ENCODE measurements at regions of chr20 and their contacts with region 1.

Region 1: GRCh38 chr20:31723319-31724078 is 831 bp upstream of the BCL2L1 start:
- DNase-seq: peak; percentile 97
- H3K4me3 Mint-ChIP-seq: peak overlapping the region; percentile 96
- H3K27ac Mint-ChIP-seq: peak overlapping the region; percentile 97
- H3K4me1 Mint-ChIP-seq: peaks cover 28% of the 10 kb centered on the region
- H3K27me3 Mint-ChIP-seq: no peaks in the 10 kb centered on the region

Region 2: DNA sequence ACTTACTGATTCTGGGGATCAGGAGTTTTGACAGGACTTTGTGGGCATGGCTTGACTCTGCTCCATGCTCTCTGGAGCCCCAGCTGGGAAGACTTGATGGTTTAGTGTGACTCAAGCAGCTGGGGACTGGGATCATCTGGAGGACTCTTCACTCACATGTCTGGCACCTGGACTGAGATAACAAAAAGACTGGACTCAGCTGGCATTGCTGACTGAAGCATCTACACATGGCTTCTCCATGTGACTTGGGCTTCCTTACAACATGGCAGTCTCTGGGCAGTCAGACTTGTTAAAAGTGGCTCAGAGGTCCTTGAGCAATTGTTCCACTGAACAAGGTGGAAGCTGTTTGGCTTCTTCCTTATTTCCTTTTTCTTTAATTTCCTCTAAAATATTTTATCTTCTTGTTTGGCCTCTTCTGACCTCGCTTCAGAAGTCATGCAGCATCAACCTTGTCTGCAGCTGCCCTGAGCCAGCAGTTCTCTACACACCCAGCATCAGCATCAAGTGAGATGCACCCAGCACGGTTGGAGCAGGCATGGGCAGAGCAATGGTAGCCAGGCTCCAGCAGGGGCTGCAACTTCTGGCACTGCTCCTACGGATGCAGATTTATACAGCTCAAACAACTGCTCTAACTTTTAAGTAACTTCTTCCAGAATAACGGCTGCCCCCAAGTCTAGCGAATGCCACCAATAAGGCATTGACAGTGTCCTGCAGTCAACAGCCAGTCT is 214.8 kb before region 1 on chr20:
- CTCF ChIA-PET with region 1: no interaction called
- DNase-seq: no peak
- H3K4me3 Mint-ChIP-seq: no peak overlapping the region
- H3K27ac Mint-ChIP-seq: no peak overlapping the region
- H3K4me1 Mint-ChIP-seq: peaks cover under 1% of the 10 kb centered on the region
- H3K27me3 Mint-ChIP-seq: peaks cover 33% of the 10 kb centered on the region

Region 3: GRCh38 chr20:31633339-31633914 is 90.1 kb before region 1 on chr20:
- CTCF ChIA-PET with region 1: interaction called, 54 read pairs
- DNase-seq: no peak
- H3K4me3 Mint-ChIP-seq: no peak overlapping the region
- H3K27ac Mint-ChIP-seq: no peak overlapping the region
- H3K4me1 Mint-ChIP-seq: no peaks in the 10 kb centered on the region
- H3K27me3 Mint-ChIP-seq: peaks cover 16% of the 10 kb centered on the region

Region 4: GRCh38 chr20:31661625-31662371 is 61.7 kb before region 1 on chr20:
- CTCF ChIA-PET with region 1: interaction called, 348 read pairs
- DNase-seq: peak; percentile 84
- H3K4me3 Mint-ChIP-seq: peak overlapping the region; percentile 73
- H3K27ac Mint-ChIP-seq: peak overlapping the region; percentile 89
- H3K4me1 Mint-ChIP-seq: peaks cover 57% of the 10 kb centered on the region
- H3K27me3 Mint-ChIP-seq: no peaks in the 10 kb centered on the region

Region 5: DNA sequence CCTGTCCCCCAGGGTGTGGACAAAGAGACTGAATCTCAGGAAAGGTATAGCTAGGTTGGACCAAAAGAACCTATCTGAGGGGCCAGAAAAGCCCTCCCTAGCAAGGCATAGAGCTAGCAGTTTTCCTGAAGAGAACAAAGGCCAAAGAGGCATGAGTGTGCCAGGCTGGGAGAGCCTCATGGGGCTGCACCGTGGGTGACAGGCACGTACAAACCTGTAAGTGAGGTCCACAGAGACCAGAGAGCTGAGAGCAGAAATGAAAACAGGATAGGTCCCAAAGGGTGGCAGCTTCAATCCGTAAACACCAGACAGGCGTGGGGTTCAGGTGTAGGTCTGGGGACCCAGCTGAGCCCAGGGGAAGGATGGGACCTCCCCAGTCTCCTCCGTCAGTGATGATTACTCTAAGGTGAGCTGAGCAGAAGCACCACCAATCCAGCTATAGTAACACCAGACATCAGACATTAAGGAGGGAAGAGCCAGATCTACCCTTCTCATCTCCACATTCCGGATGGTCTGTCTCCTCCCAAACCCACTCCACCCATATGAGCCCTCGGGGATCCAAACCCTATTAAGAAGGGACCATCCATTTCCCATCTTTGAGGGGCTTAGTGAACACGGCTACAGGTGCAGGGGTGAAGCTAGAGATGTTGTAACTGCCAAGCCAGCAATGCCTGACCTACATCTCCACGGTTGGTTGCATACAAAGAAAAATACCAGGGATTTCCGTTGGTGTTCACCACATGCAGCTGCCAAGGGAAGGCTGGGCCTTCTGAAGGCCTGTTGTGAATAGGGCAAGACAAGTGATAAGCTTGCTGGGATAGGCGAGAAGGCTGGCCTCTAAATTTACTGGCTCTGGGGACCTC is 39.1 kb before region 1 on chr20:
- CTCF ChIA-PET with region 1: interaction called, 10 read pairs
- DNase-seq: no peak
- H3K4me3 Mint-ChIP-seq: no peak overlapping the region
- H3K27ac Mint-ChIP-seq: peak overlapping the region; percentile 82
- H3K4me1 Mint-ChIP-seq: peaks cover 85% of the 10 kb centered on the region
- H3K27me3 Mint-ChIP-seq: no peaks in the 10 kb centered on the region

Region 6: DNA sequence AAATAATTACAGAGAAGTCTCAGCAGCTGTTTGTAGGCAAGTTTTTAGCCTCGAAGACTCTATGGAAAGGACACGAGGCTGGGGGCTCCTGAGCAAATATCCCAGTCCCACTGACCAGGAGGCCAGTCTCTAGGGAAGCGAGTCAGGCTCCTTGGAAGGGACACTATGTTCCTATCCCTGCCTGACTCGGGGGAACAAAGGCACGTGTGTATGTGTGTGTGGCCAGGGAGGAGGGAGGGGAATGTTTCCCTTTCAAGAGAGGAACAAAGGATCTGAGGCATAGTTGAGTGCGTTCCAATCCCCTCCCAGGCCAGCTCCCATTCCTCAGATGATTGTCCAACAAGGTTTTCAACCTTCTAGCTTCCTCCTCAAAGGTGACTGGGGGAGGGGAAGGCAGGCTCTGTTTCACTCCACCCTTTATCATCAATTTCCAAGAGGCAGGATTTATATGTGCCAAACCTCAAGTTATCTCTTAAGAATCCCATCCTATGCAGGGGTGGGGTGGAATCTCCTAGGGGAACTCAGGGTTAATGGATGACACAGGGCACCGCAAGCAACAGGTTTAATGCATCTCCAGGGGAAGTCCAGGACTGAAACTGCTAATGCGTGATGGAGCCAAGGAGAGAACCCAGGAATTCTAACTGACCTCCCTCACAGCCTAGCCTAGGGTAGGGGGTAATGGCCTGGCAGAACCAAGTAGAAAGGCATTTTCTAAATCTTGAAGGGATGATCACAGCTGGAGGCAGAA is 10.8 kb before region 1 on chr20:
- CTCF ChIA-PET with region 1: interaction called, 11 read pairs
- DNase-seq: no peak
- H3K4me3 Mint-ChIP-seq: no peak overlapping the region
- H3K27ac Mint-ChIP-seq: no peak overlapping the region
- H3K4me1 Mint-ChIP-seq: peaks cover 88% of the 10 kb centered on the region
- H3K27me3 Mint-ChIP-seq: no peaks in the 10 kb centered on the region

Region 7: DNA sequence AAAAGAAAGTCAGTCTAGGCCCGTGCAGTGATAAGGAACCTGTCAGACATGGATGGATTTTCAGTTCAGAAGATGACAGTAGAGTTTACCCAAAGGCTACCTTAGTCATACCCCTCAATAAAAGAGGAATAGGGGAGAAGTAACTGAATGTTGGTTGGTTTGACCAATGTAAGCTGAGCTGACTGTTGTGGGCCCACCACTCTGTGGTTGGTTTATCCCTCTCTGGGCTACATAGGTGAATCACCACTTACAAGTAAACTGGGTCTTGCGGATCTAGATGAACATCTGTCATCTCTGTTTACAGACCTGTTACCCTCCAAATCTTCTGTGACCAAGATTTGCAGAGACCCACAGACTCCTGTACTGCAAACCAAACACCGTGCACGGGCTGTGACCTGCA is 58.4 kb after region 1 on chr20:
- CTCF ChIA-PET with region 1: no interaction called
- DNase-seq: no peak
- H3K4me3 Mint-ChIP-seq: no peak overlapping the region
- H3K27ac Mint-ChIP-seq: no peak overlapping the region
- H3K4me1 Mint-ChIP-seq: no peaks in the 10 kb centered on the region
- H3K27me3 Mint-ChIP-seq: no peaks in the 10 kb centered on the region

Measured in activated naive CD4-positive, alpha-beta T cell treated with anti-CD3 and anti-CD28 coated beads, Interleukin-2, amount 10 ng/mL, durations not matched to agents 7 days and 5 days (primary cell).